Left cardiac atrium (tissue), 4 donors: ENCODE measurements at regions of chr7 and their contacts with region 1.

Region 1: GRCh38 chr7:132580717-132581285 is 4.5 kb upstream of the PLXNA4 start:
- DNase-seq: peak; percentile 80
- ATAC-seq: peak; percentile 35 to 58

Region 2: GRCh38 chr7:131546583-131547111 is 1034.2 kb before region 1 on chr7:
- intact Hi-C with region 1: no loop called
- DNase-seq: no peak
- ATAC-seq: no peak

Region 3: DNA sequence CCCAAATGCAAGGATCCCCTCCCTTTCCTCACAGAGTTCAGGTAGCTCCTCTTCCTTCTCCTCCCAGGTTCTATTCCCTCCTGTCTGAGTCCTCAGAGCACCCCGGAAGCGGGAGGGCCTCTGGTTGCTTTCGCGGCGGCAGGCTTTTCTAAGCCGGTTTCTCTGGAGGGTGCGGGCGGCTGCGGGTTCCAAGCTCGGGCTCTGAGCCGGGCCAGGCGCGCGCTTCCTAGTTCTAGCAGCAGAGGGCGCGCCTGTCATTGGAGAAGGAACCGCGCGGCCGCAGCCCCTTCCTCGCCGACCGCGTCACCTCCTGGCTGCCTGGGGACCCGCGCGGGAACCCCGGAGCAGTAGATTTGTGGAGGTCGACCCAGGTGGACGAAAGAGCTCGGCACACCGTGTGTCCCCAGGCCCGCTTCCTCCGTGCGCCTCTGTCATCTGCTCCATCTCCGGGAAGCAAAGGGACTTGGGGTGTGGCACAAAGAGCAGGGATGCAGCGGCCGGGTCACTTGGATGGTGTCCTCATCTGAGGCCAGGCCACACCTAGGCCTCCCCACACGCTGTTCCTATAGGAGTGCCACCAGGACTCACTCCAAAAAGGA is 635.4 kb before region 1 on chr7:
- intact Hi-C with region 1: loop called in 1 of 2 experiments (anchors 2 kb)
- DNase-seq: peak; percentile 57
- ATAC-seq: peak; percentile 64 to 71

Region 4: GRCh38 chr7:132004536-132005272 is 576.1 kb before region 1 on chr7:
- intact Hi-C with region 1: loop called in 1 of 2 experiments (anchors 5 kb)
- DNase-seq: peak; percentile 32
- ATAC-seq: peak; percentile 83 to 93

Region 5: GRCh38 chr7:132318352-132319318 is 262.2 kb before region 1 on chr7:
- intact Hi-C with region 1: loop called (anchors 2 to 5 kb)
- DNase-seq: peak; percentile 88
- ATAC-seq: peak; percentile 89 to 91

Region 6: DNA sequence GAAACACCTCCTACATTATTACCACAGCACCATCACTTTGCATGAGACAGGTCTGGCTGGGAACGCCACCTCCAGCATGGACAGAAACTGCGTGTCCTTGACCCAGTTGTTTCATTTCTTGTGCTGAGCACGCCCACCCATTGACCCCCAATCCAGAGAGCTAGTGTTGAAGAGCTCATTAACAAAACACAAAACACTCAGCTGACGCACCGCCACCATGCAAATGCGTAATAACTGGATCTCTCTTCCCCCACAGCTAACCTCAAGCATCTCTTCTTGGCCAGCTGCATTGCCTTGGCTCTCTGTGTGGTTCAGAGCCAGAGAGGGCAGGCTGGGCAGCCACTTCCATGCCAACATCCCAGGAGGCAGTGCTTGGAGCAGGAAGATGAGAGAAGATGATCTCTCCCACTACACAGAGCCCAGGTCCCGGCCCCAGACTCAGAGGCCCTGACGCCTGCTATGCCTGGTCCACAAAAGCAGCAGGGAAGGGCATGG is 178.0 kb before region 1 on chr7:
- intact Hi-C with region 1: loop called in 1 of 2 experiments (anchors 10 kb)
- DNase-seq: peak; percentile 73
- ATAC-seq: peak; percentile 75 to 92

Region 7: DNA sequence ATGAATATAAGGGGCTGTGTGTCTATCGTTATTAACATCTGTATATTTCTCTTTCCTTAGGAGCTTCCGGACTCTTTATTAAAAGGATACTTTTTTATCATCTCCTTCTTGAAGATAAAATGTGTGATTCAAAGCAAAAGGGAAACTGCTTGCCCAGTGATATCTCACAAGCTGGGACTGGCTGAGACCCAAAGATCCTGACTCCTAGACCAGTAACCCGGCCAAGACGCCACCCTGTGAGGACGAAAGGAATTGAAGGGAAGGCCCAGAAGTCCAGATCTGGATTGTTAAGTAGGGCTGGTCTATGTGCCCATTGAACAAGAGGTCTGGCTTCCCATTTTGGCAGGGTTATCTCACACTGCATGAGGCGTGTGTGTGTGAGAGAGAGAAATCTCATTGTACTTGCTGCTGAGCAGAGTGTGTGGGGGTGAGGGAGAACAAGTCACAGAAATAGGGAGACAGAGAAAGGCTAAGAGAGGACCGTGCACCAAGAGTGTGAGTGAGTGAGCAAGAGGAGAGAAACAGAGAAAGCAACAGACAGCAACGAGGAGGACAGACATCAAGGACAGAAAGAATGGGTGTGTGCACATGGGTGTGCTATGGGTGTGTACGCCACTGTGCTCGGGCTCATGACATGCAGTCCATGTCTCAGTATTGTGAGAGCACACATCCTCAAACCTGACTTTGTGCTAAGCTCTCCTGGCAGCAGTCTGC is 79.9 kb before region 1 on chr7:
- intact Hi-C with region 1: loop called in 1 of 2 experiments (anchors 5 kb)
- DNase-seq: peak; percentile 90
- ATAC-seq: peak; percentile 77 to 92